ENCODE measurements at regions of chr3 and their contacts with region 1.

Region 1: GRCh38 chr3:194134757-194135528 is 1.0 kb upstream of the HES1 start:
- DNase-seq: peak; percentile 99
- H3K4me3 ChIP-seq: peak overlapping the region; percentile 32 to 44 (median 42)
- H3K27ac ChIP-seq: peak overlapping the region; percentile 88
- H3K4me1 ChIP-seq: peaks cover 60% of the 10 kb centered on the region
- H3K27me3 ChIP-seq: no peaks in the 10 kb centered on the region
- CTCF ChIP-seq: no peak

Region 2: DNA sequence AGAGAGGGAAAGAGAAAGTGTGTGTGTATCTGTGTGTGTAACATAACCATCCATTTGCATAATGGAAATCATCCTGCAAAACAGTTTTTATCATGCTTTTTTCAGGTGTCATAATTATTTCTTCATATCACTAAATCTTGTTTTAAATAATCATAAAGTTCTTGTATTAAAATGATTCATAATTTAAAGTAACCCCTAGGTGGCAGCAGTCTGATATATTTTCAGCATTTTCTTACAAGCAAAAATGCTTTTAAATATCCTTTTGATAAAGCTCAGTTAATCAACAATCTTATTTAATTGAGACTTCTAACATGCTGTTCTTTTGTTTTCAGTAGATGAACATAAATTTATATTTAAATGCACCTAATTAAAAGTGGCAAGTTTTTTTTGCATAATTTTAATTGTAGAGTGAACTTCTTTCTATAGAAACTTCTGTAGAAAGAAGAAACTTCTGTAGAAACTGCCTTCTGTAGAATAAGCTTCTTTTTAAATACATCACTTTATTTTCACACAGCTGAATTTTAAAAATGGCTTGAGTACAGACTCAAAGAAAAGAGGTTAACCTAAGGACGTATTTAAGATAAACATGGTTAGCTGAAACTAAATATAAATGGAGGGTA is 469.5 kb before region 1 on chr3:
- CTCF ChIA-PET with region 1: no interaction called
- dilution Hi-C with region 1: no loop called
- in situ Hi-C with region 1: no loop called
- intact Hi-C with region 1: loop called (anchors 2 kb)
- DNase-seq: peak; percentile 18
- H3K4me3 ChIP-seq: no peak overlapping the region
- H3K27ac ChIP-seq: no peak overlapping the region
- H3K4me1 ChIP-seq: no peaks in the 10 kb centered on the region
- H3K27me3 ChIP-seq: no peaks in the 10 kb centered on the region
- CTCF ChIP-seq: peak; percentile 29 to 34

Region 3: GRCh38 chr3:193831495-193832455 is 303.2 kb before region 1 on chr3:
- CTCF ChIA-PET with region 1: no interaction called
- dilution Hi-C with region 1: no loop called
- in situ Hi-C with region 1: loop called in 1 of 2 experiments (anchors 5 kb)
- intact Hi-C with region 1: loop called (anchors 1 kb)
- DNase-seq: peak; percentile 100
- H3K4me3 ChIP-seq: no peak overlapping the region
- H3K27ac ChIP-seq: peak overlapping the region; percentile 100
- H3K4me1 ChIP-seq: peaks cover 51% of the 10 kb centered on the region
- H3K27me3 ChIP-seq: no peaks in the 10 kb centered on the region
- CTCF ChIP-seq: no peak

Region 4: DNA sequence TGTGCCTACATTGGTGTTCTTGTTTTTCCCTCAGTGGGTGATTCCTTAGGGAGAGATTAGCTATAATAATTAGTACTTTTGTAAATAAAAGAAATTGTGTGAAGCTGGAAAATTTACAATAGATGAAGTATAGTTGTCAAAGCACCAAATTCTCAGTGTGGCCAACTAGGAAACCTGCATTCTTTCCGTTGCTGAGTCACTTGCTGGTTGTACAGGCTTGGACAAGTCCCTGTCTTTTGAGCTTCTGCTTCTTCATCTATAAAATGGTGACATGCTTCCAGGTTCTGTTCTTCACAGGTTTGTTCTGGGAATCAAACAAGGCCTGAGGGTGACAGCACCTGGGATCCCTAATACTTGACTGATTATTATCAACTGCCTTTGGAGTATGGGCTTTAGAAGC is 183.1 kb before region 1 on chr3:
- CTCF ChIA-PET with region 1: no interaction called
- dilution Hi-C with region 1: no loop called
- in situ Hi-C with region 1: no loop called
- intact Hi-C with region 1: loop called (anchors 2 kb)
- DNase-seq: peak; percentile 86
- H3K4me3 ChIP-seq: no peak overlapping the region
- H3K27ac ChIP-seq: peak overlapping the region; percentile 71
- H3K4me1 ChIP-seq: peaks cover 31% of the 10 kb centered on the region
- H3K27me3 ChIP-seq: no peaks in the 10 kb centered on the region
- CTCF ChIP-seq: no peak

Region 5: GRCh38 chr3:194070634-194071409 is 64.1 kb before region 1 on chr3:
- CTCF ChIA-PET with region 1: no interaction called
- dilution Hi-C with region 1: no loop called
- in situ Hi-C with region 1: no loop called
- intact Hi-C with region 1: loop called (anchors 1 kb)
- DNase-seq: peak; percentile 95
- H3K4me3 ChIP-seq: peak overlapping the region; percentile 18 to 40 (median 24)
- H3K27ac ChIP-seq: peak overlapping the region; percentile 61
- H3K4me1 ChIP-seq: peaks cover 20% of the 10 kb centered on the region
- H3K27me3 ChIP-seq: no peaks in the 10 kb centered on the region
- CTCF ChIP-seq: no peak

Region 6: GRCh38 chr3:194323785-194324735 is 189.1 kb after region 1 on chr3:
- CTCF ChIA-PET with region 1: no interaction called
- dilution Hi-C with region 1: no loop called
- in situ Hi-C with region 1: loop called in 1 of 2 experiments (anchors 5 kb)
- intact Hi-C with region 1: loop called (anchors 2 kb)
- DNase-seq: no peak
- H3K4me3 ChIP-seq: no peak overlapping the region
- H3K27ac ChIP-seq: peak overlapping the region; percentile 28
- H3K4me1 ChIP-seq: peaks cover 16% of the 10 kb centered on the region
- H3K27me3 ChIP-seq: no peaks in the 10 kb centered on the region
- CTCF ChIP-seq: no peak

Measured in mammary epithelial cell (primary cell).